Sigmoid colon (tissue), 7 donors: ENCODE measurements at regions of chr3 and their contacts with region 1.

Region 1: GRCh38 chr3:150495563-150496168 is 50.6 kb downstream of the SERP1 start:
- DNase-seq: no peak
- H3K4me3 ChIP-seq: no peak overlapping the region
- H3K27ac ChIP-seq: no peak overlapping the region
- H3K4me1 ChIP-seq: no peaks in the 10 kb centered on the region
- H3K27me3 ChIP-seq: no peaks in the 10 kb centered on the region
- CTCF ChIP-seq: peak; percentile 38 to 81 (median 70)
- EP300 ChIP-seq: no peak
- POLR2A ChIP-seq: no peak

Region 2: DNA sequence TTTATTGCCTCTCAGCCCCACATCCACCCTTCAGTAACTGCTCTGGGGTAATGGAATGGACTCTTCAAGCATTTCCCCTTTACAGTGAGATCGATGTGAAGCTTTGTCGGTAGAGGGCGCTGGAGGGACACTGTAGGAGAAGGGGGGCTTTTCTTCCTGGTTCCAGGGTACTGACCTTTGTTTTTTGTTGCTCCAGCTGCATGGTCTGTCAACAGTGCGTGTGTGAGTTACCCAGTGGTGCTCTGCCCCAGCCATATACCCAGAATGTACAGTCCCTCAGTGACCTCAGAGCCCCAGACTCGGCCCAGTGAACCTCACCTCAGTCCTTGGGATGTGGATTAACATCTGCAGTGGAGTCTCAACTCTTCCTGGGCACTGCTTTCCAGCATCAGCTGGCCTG is 267.8 kb before region 1 on chr3:
- intact Hi-C with region 1: loop called (anchors 5 kb)
- DNase-seq: no peak
- H3K4me3 ChIP-seq: no peak overlapping the region
- H3K27ac ChIP-seq: no peak overlapping the region
- H3K4me1 ChIP-seq: peaks cover 0 to 6% (median under 1%) of the 10 kb centered on the region in 4 donors
- H3K27me3 ChIP-seq: no peaks in the 10 kb centered on the region
- CTCF ChIP-seq: peak; percentile 45 to 63 (median 46)
- EP300 ChIP-seq: no peak
- POLR2A ChIP-seq: no peak

Region 3: DNA sequence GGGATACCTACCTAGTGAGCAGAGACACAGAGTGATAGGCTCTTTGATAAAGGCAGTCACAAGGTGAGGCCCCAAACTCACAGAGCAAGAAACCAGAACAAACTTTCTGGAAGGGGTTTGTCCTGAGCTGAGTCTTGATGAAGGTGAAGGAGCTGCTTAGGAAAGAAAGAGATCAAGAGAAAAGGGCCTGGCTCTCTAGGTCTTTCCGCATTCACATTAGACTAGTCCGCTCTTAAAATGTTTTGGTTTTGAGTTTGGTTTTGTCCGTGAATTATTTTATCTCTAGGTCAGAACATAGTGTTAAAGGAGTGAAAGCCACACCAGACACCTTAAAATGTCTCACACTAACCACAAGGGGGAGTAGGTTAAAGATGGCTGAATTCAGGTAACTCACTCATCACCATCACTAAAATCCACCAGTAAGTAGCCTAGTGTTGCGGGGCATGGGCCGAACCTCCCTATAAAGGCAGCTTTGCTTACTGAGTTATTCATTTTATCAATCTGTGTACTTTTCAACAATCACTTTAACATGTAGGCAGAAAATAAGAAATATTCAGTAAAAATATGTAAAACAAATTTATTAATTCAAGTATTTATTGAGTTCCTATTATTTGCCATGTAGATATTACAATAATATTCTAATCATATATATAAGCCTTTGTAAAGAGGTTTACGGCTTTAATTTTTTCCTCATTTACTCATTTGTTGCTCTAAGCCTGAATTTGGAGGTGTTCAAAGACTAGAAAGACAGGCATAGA is 209.1 kb before region 1 on chr3:
- intact Hi-C with region 1: loop called (anchors 2 kb)
- DNase-seq: no peak
- H3K4me3 ChIP-seq: no peak overlapping the region
- H3K27ac ChIP-seq: no peak overlapping the region
- H3K4me1 ChIP-seq: no peaks in the 10 kb centered on the region
- H3K27me3 ChIP-seq: no peaks in the 10 kb centered on the region
- CTCF ChIP-seq: peak in 3 of 4 experiments; percentile 39 to 61 (median 44)
- EP300 ChIP-seq: no peak
- POLR2A ChIP-seq: no peak